A549 (cell line): ENCODE measurements at regions of chr7 and their contacts with region 1.

Region 1: GRCh38 chr7:32204361-32205018 is 134.3 kb upstream of the PDE1C start:
- DNase-seq: peak; percentile 79 to 91
- ATAC-seq: peak; percentile 99
- H3K4me3 ChIP-seq: peak overlapping the region; percentile 19; the same call in 2 of the 3 replicates
- H3K27ac ChIP-seq: peak overlapping the region; percentile 40 to 76; a peak in 5 of 6 replicates
- H3K4me1 ChIP-seq: peaks cover 4% of the 10 kb centered on the region; the same call in 2 of the 3 replicates
- CTCF ChIP-seq: peak; percentile 95
- EP300 ChIP-seq: no peak
- POLR2A ChIP-seq: no peak
- RAD21 ChIP-seq: peak; percentile 99 to 100

Region 2: DNA sequence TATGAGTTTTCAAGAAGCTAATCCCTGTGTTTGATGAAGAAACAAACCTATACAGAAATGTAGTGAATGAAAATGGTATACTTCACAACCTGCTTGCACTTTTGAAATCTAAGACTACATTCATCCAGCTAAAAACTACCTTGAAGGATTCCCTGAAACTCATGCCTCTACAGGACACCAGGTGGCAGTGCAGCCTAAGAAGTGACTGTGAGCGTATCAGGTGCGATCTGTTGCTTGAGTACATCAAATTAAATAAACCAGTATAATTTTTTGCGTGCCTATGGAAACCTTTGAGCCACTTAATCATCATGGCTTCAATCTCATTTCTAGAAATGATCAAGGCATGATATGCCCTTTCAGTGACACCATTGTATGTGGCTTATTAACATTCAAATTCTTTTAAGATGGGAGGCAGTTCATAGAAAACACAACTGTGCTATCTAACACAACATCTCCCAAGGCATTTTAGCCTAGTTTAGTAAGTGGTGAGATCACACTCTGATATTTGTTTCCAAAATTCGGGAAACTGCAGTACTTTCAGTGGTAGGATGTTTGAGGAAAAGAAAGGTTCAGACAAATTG is 460.1 kb before region 1 on chr7:
- CTCF ChIA-PET with region 1: interaction called, 261 read pairs
- POLR2A ChIA-PET with region 1: no interaction called
- DNase-seq: peak; percentile 44 to 82
- ATAC-seq: peak; percentile 77 to 93; a peak in 4 of 6 replicates
- H3K4me3 ChIP-seq: no peak overlapping the region
- H3K27ac ChIP-seq: peak overlapping the region in 1 of 2 experiments; percentile 11; a peak in 1 of 6 replicates
- H3K4me1 ChIP-seq: peaks cover 22% of the 10 kb centered on the region
- CTCF ChIP-seq: peak; percentile 96
- EP300 ChIP-seq: no peak
- POLR2A ChIP-seq: no peak
- RAD21 ChIP-seq: peak; percentile 99

Region 3: DNA sequence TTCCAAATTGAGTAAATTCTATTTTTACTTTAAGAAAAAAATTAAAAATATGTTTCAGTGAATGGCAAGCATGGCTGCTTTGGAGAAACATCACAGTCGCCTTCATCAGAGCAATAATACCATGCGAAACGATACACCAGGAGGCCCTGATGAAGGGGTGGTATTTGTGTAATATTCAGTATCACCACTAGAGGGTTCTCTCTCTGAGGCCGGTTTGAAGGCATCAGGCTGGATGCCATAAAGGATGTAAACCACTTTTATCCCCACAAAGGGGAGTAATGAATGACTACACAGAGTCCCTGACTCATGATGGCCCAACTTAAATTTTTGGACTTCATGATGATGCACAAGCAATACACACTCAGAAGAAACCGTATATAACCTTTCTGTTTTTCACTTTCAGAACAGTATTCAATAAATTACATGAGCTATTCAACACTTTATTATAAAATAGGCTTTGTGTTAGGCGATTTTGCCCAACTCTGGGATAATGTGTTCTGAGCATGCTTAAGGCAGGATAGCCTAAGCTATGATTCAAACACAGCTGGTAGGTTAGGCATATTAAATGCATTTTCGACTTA is 422.0 kb before region 1 on chr7:
- CTCF ChIA-PET with region 1: interaction called, 44 read pairs
- POLR2A ChIA-PET with region 1: no interaction called
- DNase-seq: peak; percentile 67 to 75
- ATAC-seq: peak; percentile 92 to 97
- H3K4me3 ChIP-seq: no peak overlapping the region
- H3K27ac ChIP-seq: no peak overlapping the region
- H3K4me1 ChIP-seq: no peaks in the 10 kb centered on the region
- CTCF ChIP-seq: peak; percentile 76
- EP300 ChIP-seq: no peak
- POLR2A ChIP-seq: no peak
- RAD21 ChIP-seq: peak; percentile 61 to 68

Region 4: GRCh38 chr7:32043714-32044113 is 160.8 kb before region 1 on chr7:
- CTCF ChIA-PET with region 1: interaction called, 10 read pairs
- POLR2A ChIA-PET with region 1: no interaction called
- DNase-seq: peak; percentile 46 to 95
- ATAC-seq: peak; percentile 81 to 85
- H3K4me3 ChIP-seq: no peak overlapping the region
- H3K27ac ChIP-seq: peak overlapping the region; percentile 81 to 84
- H3K4me1 ChIP-seq: peaks cover 99% of the 10 kb centered on the region
- CTCF ChIP-seq: no peak
- EP300 ChIP-seq: peak; percentile 70 to 79; a peak in 3 of 5 replicates
- POLR2A ChIP-seq: no peak
- RAD21 ChIP-seq: no peak; a peak in 2 of 5 replicates

Region 5: GRCh38 chr7:32179567-32179966 is 24.9 kb before region 1 on chr7:
- CTCF ChIA-PET with region 1: interaction called, 12 read pairs
- POLR2A ChIA-PET with region 1: no interaction called
- DNase-seq: no peak
- ATAC-seq: no peak
- H3K4me3 ChIP-seq: no peak overlapping the region
- H3K27ac ChIP-seq: no peak overlapping the region
- H3K4me1 ChIP-seq: no peaks in the 10 kb centered on the region
- CTCF ChIP-seq: no peak
- EP300 ChIP-seq: no peak
- POLR2A ChIP-seq: no peak
- RAD21 ChIP-seq: no peak

Region 6: DNA sequence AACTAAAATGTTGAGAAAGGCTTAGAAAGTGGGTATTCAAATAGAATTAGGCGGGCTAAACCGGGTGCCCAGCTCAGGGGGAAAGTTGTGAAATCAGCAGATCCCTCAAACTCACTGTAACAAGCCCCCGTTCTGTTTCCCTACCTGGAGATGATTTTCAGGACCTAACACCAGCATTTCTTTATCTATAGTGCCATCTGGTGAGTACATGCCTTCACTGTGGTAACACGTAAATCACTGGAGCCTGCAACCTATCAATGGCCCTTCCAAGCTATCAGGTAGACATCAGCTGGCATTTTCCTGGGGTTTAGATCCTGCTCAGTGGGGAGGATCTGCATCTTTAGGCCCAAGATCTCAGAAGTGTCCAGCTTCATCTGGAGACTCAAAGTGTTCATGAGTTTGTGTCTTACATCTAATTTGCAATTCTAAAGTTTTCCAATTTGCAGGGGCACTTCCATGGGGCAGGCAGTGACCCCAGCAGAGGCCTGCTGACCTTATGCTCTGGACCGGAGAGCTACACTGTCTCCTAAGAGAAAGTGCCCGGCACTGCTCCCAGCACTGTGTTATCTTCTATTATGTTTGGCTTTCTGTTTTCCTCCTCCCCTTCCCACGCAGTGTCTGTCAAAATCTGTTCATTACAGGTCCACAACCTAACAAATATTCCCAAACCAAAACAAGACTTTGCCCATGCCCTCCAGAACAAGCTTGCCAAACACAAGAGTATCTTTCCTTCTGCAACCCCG is 153.2 kb after region 1 on chr7:
- CTCF ChIA-PET with region 1: interaction called, 76 read pairs
- POLR2A ChIA-PET with region 1: no interaction called
- DNase-seq: peak; percentile 22 to 25
- ATAC-seq: peak; percentile 72 to 73; a peak in 5 of 6 replicates
- H3K4me3 ChIP-seq: no peak overlapping the region
- H3K27ac ChIP-seq: no peak overlapping the region
- H3K4me1 ChIP-seq: no peaks in the 10 kb centered on the region
- CTCF ChIP-seq: peak; percentile 41
- EP300 ChIP-seq: no peak
- POLR2A ChIP-seq: no peak
- RAD21 ChIP-seq: peak; percentile 58 to 59

Region 7: DNA sequence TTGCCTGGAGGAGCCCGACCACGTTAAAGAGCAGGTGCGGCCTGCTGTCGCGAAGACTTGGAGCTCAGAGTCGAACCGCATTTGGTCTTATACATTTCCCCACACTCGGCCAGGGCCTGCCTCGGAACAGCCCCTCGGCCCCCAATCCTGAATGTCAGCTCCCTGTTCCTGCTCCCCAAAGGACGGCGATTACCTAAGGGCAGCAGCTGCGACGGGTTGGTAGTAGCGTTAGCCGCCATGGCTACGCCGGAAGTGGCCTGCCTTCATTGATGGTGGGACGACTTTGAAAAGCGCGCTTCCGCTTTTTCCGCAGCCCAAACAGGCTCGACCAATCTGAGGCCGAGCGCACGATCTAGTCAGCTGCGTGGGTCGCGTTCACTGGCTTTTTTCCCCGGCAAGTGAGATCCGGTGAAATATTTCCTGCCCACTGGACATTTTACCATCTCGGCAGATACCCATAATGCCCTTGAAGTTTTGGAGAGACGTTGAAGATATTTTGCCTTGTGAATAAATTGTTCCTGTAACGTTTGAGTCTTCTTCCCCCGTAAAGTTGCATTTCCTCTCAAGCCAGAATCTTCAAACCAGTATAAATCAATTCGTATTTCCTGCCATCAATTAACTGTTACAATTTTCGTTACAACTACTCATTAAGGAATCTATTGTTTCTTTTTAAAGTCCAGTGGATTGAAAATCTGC is 285.8 kb after region 1 on chr7 and contains the start of gene LSM5:
- CTCF ChIA-PET with region 1: interaction called, 11 read pairs
- POLR2A ChIA-PET with region 1: no interaction called
- DNase-seq: peak; percentile 72 to 97
- ATAC-seq: peak; percentile 91 to 93
- H3K4me3 ChIP-seq: peak within 1 kb of the TSS; percentile 79
- H3K27ac ChIP-seq: peak within 1 kb of the TSS; percentile 90 to 91
- H3K4me1 ChIP-seq: peaks cover 21% of the 10 kb centered on the region
- CTCF ChIP-seq: no peak
- EP300 ChIP-seq: no peak
- POLR2A ChIP-seq: peak; percentile 75
- RAD21 ChIP-seq: no peak
- polyA plus RNA-seq, gene LSM5: 76.3 and 158 TPM in 2 replicates